A673 (cell line): ENCODE measurements at regions of chr14 and their contacts with region 1.

Region 1: GRCh38 chr14:77053046-77053841 is 24.7 kb upstream of the IRF2BPL start:
- DNase-seq: peak; percentile 94
- H3K4me3 ChIP-seq: no peak overlapping the region
- H3K27ac ChIP-seq: peak overlapping the region; percentile 3
- H3K4me1 ChIP-seq: peaks cover 14% of the 10 kb centered on the region
- H3K27me3 ChIP-seq: no peaks in the 10 kb centered on the region
- CTCF ChIP-seq: peak; percentile 99

Region 2: GRCh38 chr14:76910371-76910890 is 142.8 kb before region 1 on chr14:
- CTCF ChIA-PET with region 1: interaction called, 10 read pairs
- POLR2A ChIA-PET with region 1: no interaction called
- intact Hi-C with region 1: loop called (anchors 1 kb)
- DNase-seq: no peak
- H3K4me3 ChIP-seq: no peak overlapping the region
- H3K27ac ChIP-seq: no peak overlapping the region
- H3K4me1 ChIP-seq: peaks cover 22% of the 10 kb centered on the region
- H3K27me3 ChIP-seq: no peaks in the 10 kb centered on the region
- CTCF ChIP-seq: no peak

Region 3: GRCh38 chr14:76918751-76919543 is 134.3 kb before region 1 on chr14:
- CTCF ChIA-PET with region 1: interaction called, 6 read pairs
- POLR2A ChIA-PET with region 1: no interaction called
- intact Hi-C with region 1: loop called (anchors 1 kb)
- DNase-seq: peak; percentile 92
- H3K4me3 ChIP-seq: no peak overlapping the region
- H3K27ac ChIP-seq: peak overlapping the region; percentile 99
- H3K4me1 ChIP-seq: peaks cover 83% of the 10 kb centered on the region
- H3K27me3 ChIP-seq: no peaks in the 10 kb centered on the region
- CTCF ChIP-seq: no peak

Region 4: DNA sequence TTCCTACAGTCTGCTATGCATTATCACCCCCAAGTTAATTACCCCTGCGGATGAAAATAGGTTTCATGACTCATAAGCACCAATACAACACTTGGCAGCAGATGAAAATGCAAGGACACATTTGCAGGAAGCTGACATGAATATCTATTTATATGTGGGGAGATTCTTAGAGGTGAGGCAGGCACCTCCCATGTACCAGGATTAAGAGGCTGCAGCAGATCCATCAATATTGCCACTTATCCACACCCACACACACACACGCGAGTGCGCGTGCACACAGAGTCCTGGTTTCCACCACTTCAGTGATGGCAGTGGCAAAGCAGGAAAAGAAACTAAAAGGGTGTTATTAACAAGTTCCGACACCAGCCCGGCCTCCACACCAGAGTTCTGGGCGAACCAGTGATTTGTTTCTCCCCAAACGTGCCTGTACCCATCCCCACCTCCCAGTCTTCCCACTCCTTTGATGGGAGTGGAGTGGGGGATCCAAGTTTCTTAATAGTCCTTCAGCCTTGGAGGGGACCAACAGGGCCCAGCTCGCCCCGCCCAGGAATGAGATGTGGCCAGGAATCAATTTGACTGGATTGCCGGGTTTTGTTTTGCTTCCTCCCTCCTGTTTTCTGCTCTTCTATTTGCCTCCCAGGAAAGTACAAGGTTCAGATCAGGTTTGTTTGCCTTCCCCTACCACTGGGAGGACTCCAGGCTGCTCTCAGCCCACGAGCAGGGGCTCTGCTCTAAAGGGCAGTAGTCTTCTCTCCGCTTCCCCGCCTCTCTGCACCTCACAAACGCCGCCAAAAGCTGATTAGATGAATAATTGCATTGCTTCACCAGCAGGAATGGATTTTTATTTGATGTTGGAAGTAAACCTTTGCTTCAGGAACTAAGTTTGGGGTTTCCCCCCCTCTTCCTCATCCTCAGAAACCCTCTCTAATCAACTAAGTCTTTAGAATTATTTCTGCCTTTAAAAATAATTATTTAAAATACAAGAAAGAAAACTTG is 29.9 kb before region 1 on chr14:
- CTCF ChIA-PET with region 1: interaction called, 5 read pairs
- POLR2A ChIA-PET with region 1: no interaction called
- intact Hi-C with region 1: loop called (anchors 2 kb)
- DNase-seq: peak; percentile 74
- H3K4me3 ChIP-seq: peak overlapping the region; percentile 87
- H3K27ac ChIP-seq: peak overlapping the region; percentile 97
- H3K4me1 ChIP-seq: peaks cover 25% of the 10 kb centered on the region
- H3K27me3 ChIP-seq: no peaks in the 10 kb centered on the region
- CTCF ChIP-seq: peak; percentile 39

Region 5: DNA sequence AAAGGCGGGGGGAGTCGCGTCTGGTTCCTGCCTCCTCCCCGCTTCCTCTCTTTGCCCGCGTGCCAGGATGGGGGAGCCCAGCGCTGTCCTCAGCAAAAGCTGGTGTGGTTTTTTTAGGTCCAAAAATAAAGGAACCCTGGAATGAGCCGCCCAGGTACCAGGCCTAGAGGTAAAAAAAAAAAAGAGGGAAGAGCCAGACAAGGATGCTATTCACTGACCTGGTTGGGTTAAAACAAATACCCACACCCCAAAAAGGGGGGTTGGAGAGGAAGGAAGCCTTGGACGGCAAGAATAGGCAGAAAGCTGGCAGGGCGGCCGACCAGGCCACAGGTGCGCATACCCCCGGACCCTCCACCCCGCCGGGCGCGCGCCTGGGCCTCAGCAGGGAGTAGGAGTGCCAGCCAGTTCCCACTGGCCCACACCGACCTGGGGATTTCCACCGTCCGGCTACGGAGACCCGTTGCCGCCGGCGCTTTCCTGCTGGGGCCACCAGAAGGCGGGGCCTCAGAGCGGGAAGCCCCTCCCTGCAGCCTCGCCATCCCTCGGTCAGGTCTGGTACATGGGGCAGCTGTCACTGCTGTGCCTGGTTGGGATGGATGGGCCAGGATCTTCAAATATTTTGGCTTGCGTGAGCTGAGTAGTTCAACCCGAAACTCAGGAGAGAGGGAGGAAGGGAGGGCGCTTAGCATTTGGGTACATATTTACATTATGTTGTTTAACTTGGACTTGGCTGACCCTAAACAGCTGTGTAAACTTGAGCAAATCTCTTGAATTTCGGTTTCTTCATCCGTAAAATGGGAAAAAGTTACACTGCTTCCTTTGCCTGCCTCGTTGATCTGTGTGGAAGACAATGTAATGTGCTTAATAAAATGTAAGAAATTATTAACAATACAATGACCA is 19.4 kb before region 1 on chr14:
- CTCF ChIA-PET with region 1: interaction called, 13 read pairs
- POLR2A ChIA-PET with region 1: no interaction called
- intact Hi-C with region 1: no loop called
- DNase-seq: peak; percentile 80
- H3K4me3 ChIP-seq: peak overlapping the region; percentile 58
- H3K27ac ChIP-seq: peak overlapping the region; percentile 92
- H3K4me1 ChIP-seq: peaks cover 74% of the 10 kb centered on the region
- H3K27me3 ChIP-seq: no peaks in the 10 kb centered on the region
- CTCF ChIP-seq: no peak

Region 6: GRCh38 chr14:77177702-77178101 is 124.5 kb after region 1 on chr14:
- CTCF ChIA-PET with region 1: no interaction called
- POLR2A ChIA-PET with region 1: no interaction called
- intact Hi-C with region 1: no loop called
- DNase-seq: no peak
- H3K4me3 ChIP-seq: no peak overlapping the region
- H3K27ac ChIP-seq: no peak overlapping the region
- H3K4me1 ChIP-seq: peaks cover 7% of the 10 kb centered on the region
- H3K27me3 ChIP-seq: no peaks in the 10 kb centered on the region
- CTCF ChIP-seq: no peak